AG04450 (cell line): ENCODE measurements at regions of chr17 and their contacts with region 1.

Region 1: DNA sequence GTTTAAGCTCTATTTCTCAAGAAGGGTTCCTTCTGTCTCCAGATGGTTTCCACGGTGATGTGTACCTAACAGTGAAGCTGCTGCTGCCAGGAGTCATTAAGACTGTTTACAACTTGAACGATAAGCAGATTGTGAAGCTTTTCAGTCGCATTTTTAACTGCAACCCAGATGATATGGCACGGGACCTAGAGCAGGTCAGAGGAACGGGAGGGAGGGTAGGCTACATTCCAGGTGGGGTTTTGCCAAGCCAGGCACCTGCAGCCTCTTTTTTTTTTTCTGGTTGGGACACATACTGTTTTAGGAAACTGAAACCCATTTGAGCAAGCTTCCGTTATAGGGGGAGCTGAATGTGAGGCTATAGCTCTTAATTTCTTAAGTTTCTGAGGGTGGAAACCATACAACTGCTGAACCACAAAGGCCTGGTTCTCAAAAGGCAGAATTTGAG is 10.6 kb downstream of the LIG3 start:
- DNase-seq: no peak
- H3K4me3 ChIP-seq: no peak overlapping the region
- H3K27ac ChIP-seq: no peak overlapping the region
- H3K27me3 ChIP-seq: no peaks in the 10 kb centered on the region
- CTCF ChIP-seq: no peak

Region 2: DNA sequence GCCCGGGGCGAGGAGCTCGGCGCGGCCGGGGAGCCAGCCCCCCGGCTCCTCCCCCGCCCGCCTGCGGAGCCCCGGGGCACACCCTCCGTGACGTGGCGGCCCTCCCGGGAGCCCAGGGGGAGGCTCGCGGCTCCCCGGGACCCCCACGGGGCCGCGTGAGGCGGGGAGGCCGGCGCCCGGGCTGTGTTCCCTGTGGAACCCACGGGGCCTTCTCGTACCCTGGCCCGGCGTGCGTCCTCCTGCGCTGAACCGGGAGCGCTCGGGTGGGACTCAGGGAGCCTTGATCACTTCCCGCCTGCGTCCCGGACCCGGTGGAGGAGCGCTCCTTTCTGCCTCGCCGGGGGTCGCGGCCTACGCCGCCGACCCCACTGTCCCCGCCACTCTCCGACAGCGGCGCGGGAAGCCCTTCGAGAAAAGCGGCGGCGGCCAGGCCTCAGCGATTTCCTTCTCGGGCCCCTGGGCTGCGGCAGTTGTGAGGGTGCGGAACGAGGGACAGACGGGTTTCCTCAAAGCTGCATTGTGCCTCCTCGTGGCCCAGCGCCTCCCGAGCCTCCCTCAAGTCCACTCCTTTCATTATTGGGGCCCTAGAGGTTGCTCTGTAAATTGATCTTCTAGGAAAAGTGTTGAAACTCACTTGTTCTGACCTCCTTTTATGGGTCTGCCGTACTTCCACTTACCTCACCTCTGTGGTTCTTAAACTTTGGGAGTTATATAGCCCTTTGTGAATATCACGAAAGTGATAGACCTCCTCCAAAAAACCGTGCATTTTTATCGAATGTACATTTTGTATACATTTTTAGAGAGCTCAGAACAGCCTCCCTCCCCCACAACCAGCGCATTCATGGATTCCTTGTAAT is 10.0 kb before region 1 on chr17:
- CTCF ChIA-PET with region 1: interaction called, 4 read pairs
- POLR2A ChIA-PET with region 1: interaction called, 11 read pairs
- DNase-seq: peak; percentile 50
- H3K4me3 ChIP-seq: peak overlapping the region; percentile 72
- H3K27ac ChIP-seq: peak overlapping the region; percentile 99
- H3K27me3 ChIP-seq: no peaks in the 10 kb centered on the region
- CTCF ChIP-seq: peak; percentile 46